HepG2 (cell line): ENCODE measurements at regions of chr14 and their contacts with region 1.

Region 1: DNA sequence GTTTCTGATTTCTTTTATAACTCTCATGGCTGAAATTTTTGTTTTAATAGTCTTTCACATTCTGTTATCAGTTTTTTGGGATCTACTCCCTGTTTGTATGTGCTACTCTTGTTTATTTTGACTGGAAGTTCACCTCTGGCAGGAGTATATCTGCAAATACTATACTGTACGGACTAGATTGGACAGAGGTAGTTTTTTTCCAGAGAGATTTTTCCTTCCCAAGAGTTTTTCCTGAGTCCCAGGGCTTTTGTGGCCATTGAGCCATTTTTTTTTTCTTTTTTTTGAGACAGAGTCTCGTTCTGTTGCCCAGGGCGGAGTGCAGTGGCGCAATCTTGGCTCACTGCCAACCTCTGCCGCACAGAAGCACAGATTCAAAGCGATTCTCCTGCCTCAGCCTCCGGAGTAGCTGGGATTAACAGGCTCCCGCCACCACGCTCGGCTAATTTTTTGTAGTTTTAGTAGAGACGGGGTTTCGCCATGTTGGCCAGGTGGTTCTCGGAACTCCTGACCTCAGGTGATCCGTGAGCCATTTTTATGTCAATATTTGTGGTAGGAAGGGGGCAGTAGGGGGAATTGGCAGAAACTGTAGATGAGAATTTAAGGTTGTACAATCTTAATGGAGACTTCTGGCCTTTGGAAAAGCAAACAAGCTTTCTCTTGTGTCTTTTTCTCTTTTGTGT is 19.3 kb downstream of the KTN1 start:
- DNase-seq: peak; percentile 93
- ATAC-seq: peak; percentile 90
- H3K4me3 ChIP-seq: peak overlapping the region; percentile 46 to 52 (median 47); a peak in 5 of 6 replicates
- H3K27ac ChIP-seq: peak overlapping the region; percentile 96
- H3K4me1 ChIP-seq: peaks cover 93% of the 10 kb centered on the region
- H3K27me3 ChIP-seq: no peaks in the 10 kb centered on the region
- CTCF ChIP-seq: no peak
- EP300 ChIP-seq: peak in 1 of 2 experiments; percentile 82; a peak in 2 of 4 replicates
- POLR2A ChIP-seq: peak in 1 of 2 experiments; percentile 49; a peak in 1 of 4 replicates
- RAD21 ChIP-seq: 0 out of 2 replicates have a peak, but pooled peaks have one; percentile 13

Region 2: DNA sequence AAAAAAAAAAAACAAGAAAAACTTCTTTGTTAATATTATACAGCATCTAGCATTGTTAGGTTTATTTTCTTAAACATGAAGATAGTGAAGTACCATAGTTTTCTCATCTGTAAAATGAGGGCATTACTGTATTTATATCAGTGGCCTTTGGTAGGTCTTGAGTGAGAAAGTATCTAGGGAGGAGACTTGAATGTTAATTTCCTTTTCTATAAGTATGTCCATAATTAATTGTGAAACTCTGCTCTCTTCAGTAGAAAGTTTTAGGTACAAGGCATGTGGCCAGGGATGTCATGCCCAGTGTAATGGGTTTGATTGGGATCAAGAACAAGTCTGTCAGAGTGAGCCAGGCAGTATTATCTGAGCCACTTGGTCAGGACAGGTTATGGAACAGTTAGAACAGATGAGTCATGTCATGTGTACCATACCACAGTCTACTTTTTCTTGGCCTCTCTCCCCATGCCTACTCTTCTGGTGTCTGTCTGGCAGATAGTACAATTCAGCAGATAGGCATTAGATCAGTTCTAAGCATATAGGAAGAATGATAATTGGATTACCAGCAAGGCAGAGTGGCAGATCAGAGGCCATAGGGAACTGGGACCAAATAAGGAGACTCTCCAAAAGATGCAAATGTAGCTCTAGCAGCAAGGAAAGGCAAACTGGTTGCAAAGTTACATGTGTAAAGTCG is 297.8 kb before region 1 on chr14:
- CTCF ChIA-PET with region 1: no interaction called
- POLR2A ChIA-PET with region 1: no interaction called
- in situ Hi-C with region 1: no loop called
- intact Hi-C with region 1: no loop called
- DNase-seq: peak; percentile 28
- ATAC-seq: peak; percentile 83
- H3K4me3 ChIP-seq: no peak overlapping the region
- H3K27ac ChIP-seq: no peak overlapping the region
- H3K4me1 ChIP-seq: peaks cover 12% of the 10 kb centered on the region
- H3K27me3 ChIP-seq: no peaks in the 10 kb centered on the region
- CTCF ChIP-seq: no peak
- EP300 ChIP-seq: no peak
- POLR2A ChIP-seq: no peak
- RAD21 ChIP-seq: no peak

Region 3: DNA sequence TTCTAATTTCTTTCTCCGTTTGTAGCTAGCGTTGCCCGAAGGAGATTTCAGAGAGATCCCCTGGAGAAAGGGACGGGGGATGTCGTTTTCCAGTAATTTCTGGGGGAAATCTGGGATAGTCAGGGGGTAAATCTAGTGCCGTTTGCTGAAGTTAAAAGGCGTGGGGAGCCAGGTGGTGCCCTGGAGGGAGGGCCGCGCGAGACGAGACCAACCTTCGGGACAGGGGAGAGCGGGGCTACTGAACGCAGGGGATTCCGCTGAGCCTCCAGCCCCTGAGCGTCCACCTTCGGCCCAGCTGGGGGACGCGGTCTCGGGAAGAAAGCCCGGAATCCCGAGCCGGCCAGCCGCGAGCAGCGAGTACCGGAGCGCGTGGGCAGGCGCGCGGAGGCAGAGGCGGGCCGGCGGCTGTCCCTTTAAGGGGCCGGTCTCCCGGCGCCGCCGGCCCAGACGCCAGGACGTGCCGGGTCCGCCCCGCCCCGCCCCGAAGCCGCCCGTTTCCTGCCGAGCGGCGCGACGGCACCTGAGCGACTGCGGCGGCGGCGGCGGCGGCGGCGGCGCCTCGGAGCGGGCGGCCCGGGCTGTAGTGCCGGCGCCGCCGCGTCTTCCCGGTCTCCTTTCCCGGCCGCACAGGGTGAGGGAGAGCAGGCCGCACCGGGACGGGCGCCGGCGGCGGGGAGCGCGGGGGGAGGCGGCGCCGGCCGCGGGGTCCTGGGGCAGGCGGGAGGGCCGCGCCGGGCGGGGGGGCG is 19.4 kb before region 1 on chr14 and contains the start of gene KTN1:
- CTCF ChIA-PET with region 1: no interaction called
- POLR2A ChIA-PET with region 1: interaction called, 5 read pairs
- in situ Hi-C with region 1: no loop called
- intact Hi-C with region 1: loop called (anchors 1 kb)
- DNase-seq: peak; percentile 50
- ATAC-seq: peak; percentile 91
- H3K4me3 ChIP-seq: peak within 1 kb of the TSS; percentile 92 to 98 (median 98)
- H3K27ac ChIP-seq: peak within 1 kb of the TSS; percentile 90
- H3K4me1 ChIP-seq: peaks cover 53% of the 10 kb centered on the region
- H3K27me3 ChIP-seq: no peaks in the 10 kb centered on the region; a peak in 1 of 5 replicates
- CTCF ChIP-seq: no peak
- EP300 ChIP-seq: no peak
- POLR2A ChIP-seq: peak; percentile 50 to 61; a peak in 1 of 4 replicates
- RAD21 ChIP-seq: peak; percentile 48
- total RNA-seq, gene KTN1: 138 and 169 TPM in 2 replicates

Region 4: GRCh38 chr14:55588259-55588699 is 11.1 kb before region 1 on chr14:
- CTCF ChIA-PET with region 1: no interaction called
- POLR2A ChIA-PET with region 1: interaction called, 10 read pairs
- in situ Hi-C with region 1: no loop called
- intact Hi-C with region 1: no loop called
- DNase-seq: no peak
- ATAC-seq: no peak
- H3K4me3 ChIP-seq: no peak overlapping the region; a peak in 1 of 6 replicates
- H3K27ac ChIP-seq: peak overlapping the region; percentile 53
- H3K4me1 ChIP-seq: peaks cover 91% of the 10 kb centered on the region
- H3K27me3 ChIP-seq: no peaks in the 10 kb centered on the region
- CTCF ChIP-seq: no peak
- EP300 ChIP-seq: no peak
- POLR2A ChIP-seq: no peak
- RAD21 ChIP-seq: no peak